MCF 10A (cell line): ENCODE measurements at regions of chr6 and their contacts with region 1.

Region 1: GRCh38 chr6:27312146-27312949 is at the start of gene POM121L2:
- DNase-seq: peak; percentile 84
- H3K4me3 Mint-ChIP-seq: peak within 1 kb of the TSS; percentile 73
- H3K27ac Mint-ChIP-seq: no peak within 1 kb of the TSS
- H3K4me1 Mint-ChIP-seq: no peaks in the 10 kb centered on the region
- H3K27me3 Mint-ChIP-seq: peaks cover 12% of the 10 kb centered on the region
- CTCF ChIP-seq: peak; percentile 87
- total RNA-seq, gene POM121L2: not detected in 2 replicates

Region 2: GRCh38 chr6:27157459-27158315 is 154.7 kb before region 1 on chr6:
- CTCF ChIA-PET with region 1: no interaction called
- POLR2A ChIA-PET with region 1: no interaction called
- intact Hi-C with region 1: loop called (anchors 2 kb)
- DNase-seq: peak; percentile 66
- H3K4me3 Mint-ChIP-seq: peak overlapping the region; percentile 80
- H3K27ac Mint-ChIP-seq: peak overlapping the region; percentile 53
- H3K4me1 Mint-ChIP-seq: peaks cover 29% of the 10 kb centered on the region
- H3K27me3 Mint-ChIP-seq: no peaks in the 10 kb centered on the region
- CTCF ChIP-seq: peak; percentile 31

Region 3: DNA sequence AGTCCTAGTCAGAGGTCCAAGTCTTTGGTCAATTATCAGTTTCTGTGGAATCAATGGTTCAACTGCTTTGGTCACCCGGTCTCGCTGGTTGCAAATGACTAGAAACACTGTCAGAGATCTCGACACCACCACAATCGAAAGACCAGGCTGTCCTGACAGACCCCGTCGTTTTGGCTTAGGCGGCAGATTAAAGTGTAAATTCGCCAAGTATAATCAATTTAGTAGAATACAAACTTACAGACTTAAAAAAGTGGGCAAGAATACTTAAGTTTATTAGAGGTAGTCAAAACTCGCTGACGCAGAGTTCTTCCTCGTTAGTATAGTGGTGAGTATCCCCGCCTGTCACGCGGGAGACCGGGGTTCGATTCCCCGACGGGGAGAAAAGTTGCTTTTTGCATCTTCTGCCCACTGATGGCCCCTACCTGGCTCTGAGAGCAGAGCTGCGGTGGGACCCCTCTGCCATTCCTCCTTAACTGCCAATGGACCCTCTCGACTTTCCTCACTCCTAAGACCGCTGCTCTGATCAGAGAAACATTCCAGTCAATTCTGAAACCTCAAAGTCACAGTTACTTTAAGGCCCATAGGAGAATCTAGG is 191.2 kb after region 1 on chr6:
- CTCF ChIA-PET with region 1: interaction called, 3 read pairs
- POLR2A ChIA-PET with region 1: interaction called, 3 read pairs
- intact Hi-C with region 1: loop called (anchors 5 kb)
- DNase-seq: peak; percentile 74
- H3K4me3 Mint-ChIP-seq: peak overlapping the region; percentile 83
- H3K27ac Mint-ChIP-seq: peak overlapping the region; percentile 84
- H3K4me1 Mint-ChIP-seq: peaks cover 11% of the 10 kb centered on the region
- H3K27me3 Mint-ChIP-seq: no peaks in the 10 kb centered on the region
- CTCF ChIP-seq: no peak